Left lung (tissue), 14 donors: ENCODE measurements at regions of chr14 and their contacts with region 1.

Region 1: GRCh38 chr14:75088574-75089373 is 19.3 kb downstream of the ZC2HC1C start:
- DNase-seq: peak in 2 of 4 donors; percentile 54 to 72
- ATAC-seq: peak; percentile 87
- H3K4me3 ChIP-seq: no peak overlapping the region
- H3K27ac ChIP-seq: no peak overlapping the region
- H3K4me1 ChIP-seq: no peaks in the 10 kb centered on the region
- H3K27me3 ChIP-seq: no peaks in the 10 kb centered on the region
- CTCF ChIP-seq: peak; percentile 50 to 67

Region 2: DNA sequence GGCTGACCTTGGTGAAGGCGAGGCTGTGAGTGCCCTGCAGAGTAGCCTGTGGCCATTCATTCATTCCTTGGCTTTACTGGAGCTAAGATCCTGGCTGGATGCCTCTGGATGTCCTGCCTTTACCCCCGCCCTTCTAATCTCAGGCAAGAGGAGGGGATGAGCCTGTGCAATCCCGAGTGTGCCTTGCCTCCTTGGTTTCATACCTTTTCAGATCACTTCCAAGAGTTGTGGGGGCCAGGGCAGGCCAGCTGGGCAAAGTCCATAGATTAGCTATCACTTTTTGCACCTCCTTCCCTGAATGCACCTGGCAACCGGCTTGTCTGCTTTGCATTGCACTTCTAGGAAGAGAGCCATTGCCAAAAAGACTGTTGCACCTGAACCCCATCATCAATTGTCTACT is 739.0 kb before region 1 on chr14:
- intact Hi-C with region 1: no loop called
- DNase-seq: no peak
- ATAC-seq: no peak
- H3K4me3 ChIP-seq: no peak overlapping the region
- H3K27ac ChIP-seq: no peak overlapping the region
- H3K4me1 ChIP-seq: no peaks in the 10 kb centered on the region
- H3K27me3 ChIP-seq: peaks cover 0 to 5% of the 10 kb centered on the region in 2 donors
- CTCF ChIP-seq: no peak

Region 3: DNA sequence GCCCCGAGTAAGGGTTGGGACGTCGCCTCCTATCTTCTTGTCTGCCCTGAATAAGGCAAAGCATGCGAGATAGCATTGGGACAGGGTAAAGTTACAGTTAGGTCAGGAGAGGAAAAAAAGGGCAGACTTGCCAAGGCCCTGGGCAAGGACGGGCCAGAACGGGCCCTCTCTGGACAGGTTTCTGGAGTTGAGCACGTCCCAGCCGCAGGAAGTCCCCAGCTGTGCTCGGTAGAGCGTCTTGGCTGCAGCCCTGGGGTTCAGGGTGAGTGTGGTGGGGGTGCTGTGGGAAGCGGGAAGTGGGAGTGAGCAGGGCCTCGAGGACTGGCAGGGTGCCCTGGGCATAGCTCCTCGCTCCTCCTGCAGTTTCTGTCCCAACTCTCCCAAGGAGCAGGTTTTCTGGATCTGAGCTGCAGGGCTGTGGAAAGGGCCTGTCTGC is 171.1 kb before region 1 on chr14:
- intact Hi-C with region 1: loop called in 1 of 2 experiments (anchors 5 kb)
- DNase-seq: peak in 3 of 4 donors; percentile 47 to 76 (median 69)
- ATAC-seq: peak; percentile 23
- H3K4me3 ChIP-seq: no peak overlapping the region
- H3K27ac ChIP-seq: no peak overlapping the region
- H3K4me1 ChIP-seq: peaks cover 4 to 8% of the 10 kb centered on the region in 2 donors
- H3K27me3 ChIP-seq: peaks cover 0 to 5% of the 10 kb centered on the region in 2 donors
- CTCF ChIP-seq: no peak

Region 4: DNA sequence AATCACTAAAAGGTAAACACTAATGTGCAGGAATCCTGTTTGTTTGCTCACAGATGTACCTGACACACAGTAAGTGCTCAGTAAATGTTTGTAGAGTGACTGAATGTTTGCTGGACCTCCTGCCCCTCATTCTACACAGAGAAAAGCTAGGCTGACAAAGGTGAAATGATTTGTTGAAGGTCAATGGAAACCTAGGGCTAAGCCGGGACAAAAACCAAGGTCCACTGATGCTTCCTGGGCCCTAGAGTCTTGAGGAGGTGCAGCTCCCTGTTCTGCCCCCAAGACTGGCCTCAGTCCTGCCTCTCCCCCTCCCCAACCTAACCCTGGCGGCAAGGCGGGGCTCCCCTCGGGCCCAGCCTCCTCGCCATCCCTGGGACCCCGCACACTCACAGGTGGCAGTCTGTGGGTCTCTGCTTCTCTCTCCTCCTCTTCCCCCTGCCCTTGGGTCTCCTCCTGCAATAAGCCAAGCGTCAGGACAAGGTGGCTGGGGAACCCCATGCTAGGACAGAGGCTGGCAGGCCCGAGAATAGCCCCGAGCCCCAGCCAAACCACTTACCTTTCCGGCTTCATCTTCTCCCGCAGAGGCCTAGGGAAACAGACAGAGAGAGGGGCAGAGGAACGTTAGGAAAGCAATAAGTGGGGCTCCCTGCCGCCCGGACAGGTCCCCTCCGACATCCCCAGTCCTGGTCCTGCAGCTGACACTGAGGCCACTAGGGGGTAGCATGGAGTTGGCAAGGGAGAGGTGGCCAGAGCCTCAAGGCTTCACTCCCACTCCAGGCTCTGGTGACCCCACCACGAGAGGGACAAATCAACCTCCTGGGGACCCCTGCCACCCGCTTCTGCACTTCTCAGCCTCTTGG is 142.7 kb before region 1 on chr14:
- intact Hi-C with region 1: loop called in 1 of 2 experiments (anchors 10 kb)
- DNase-seq: peak; percentile 44 to 84 (median 79)
- ATAC-seq: peak; percentile 89
- H3K4me3 ChIP-seq: no peak overlapping the region
- H3K27ac ChIP-seq: no peak overlapping the region
- H3K4me1 ChIP-seq: peaks cover 11 to 41% of the 10 kb centered on the region in 2 donors
- H3K27me3 ChIP-seq: peaks cover 0 to 6% of the 10 kb centered on the region in 2 donors
- CTCF ChIP-seq: peak; percentile 90 to 91